ENCODE measurements at regions of chr18 and their contacts with region 1.

Region 1: DNA sequence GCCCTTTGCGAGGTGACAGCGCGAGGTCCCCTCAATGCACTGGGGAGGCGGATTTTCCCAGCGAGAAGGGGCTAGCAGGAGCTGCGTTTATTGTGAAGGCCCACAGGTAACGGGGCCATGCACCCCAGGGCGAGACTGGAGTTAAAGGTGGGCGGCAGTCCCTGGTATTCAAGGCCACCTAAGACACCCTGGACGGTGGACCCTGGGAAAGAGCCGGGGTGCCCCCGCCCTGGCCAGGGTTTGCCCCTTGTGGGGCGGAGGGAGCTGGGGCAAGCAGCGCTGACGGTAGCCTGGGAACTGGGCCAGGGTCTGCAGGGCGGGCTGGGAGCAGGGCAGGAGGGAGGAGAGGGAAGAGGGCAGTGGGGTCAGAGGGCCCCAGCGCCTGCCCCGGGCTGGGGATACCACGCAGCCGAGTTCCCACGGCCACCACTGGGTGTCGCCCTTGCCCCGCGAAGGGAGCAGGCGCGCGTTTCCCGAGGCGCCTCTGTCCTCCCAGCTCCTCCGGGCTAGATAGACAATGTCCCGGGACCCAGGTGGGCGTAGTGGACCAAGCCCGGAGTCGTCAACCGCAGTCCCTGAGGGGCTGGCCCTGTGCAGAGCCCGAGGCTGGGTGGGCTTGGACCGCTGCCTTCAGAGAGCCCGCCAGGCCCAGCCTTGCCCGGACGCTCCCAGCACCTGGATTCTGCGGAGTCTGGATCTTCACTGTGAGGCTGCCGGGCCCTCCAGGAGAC is 80.2 kb downstream of the SMAD4 start:
- DNase-seq: peak; percentile 73
- H3K4me3 ChIP-seq: peak overlapping the region; percentile 21
- H3K27ac ChIP-seq: no peak overlapping the region
- H3K4me1 ChIP-seq: no peaks in the 10 kb centered on the region
- H3K27me3 ChIP-seq: no peaks in the 10 kb centered on the region
- CTCF ChIP-seq: peak; percentile 89

Region 2: DNA sequence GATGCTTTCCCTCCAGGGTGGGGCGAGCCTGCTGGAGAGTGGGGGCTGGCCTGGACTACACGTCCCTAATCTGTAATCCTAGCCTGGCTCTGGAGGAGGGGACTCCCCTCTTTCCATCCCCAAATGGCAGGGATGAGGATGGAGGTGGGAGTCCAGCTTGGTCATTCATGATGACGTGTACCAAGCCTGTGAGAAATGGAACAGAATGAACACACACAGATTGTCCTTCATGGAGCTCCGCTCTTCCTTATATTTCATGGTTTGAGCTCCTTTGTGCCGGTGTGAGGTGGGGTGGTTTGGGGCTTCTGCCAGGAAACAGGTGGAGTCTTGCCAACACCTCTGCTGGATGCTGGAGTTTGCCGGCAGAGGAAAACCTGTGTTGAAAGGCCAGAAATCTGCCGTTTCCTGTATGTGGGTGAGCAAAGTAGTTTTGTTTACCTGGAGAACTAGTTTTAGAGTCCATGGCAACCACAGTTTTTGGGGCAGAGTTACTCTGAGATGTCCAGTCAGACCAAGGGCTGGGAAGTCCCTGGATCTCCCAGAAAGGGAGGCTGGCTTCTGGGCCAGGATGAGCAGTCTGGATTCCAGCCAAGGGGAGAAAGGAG is 504.8 kb after region 1 on chr18:
- CTCF ChIA-PET with region 1: no interaction called
- POLR2A ChIA-PET with region 1: no interaction called
- intact Hi-C with region 1: loop called (anchors 5 kb)
- DNase-seq: no peak
- H3K4me3 ChIP-seq: no peak overlapping the region
- H3K27ac ChIP-seq: no peak overlapping the region
- H3K4me1 ChIP-seq: no peaks in the 10 kb centered on the region
- H3K27me3 ChIP-seq: no peaks in the 10 kb centered on the region
- CTCF ChIP-seq: no peak